Calu3 (cell line): ENCODE measurements at regions of chr20 and their contacts with region 1.

Region 1: DNA sequence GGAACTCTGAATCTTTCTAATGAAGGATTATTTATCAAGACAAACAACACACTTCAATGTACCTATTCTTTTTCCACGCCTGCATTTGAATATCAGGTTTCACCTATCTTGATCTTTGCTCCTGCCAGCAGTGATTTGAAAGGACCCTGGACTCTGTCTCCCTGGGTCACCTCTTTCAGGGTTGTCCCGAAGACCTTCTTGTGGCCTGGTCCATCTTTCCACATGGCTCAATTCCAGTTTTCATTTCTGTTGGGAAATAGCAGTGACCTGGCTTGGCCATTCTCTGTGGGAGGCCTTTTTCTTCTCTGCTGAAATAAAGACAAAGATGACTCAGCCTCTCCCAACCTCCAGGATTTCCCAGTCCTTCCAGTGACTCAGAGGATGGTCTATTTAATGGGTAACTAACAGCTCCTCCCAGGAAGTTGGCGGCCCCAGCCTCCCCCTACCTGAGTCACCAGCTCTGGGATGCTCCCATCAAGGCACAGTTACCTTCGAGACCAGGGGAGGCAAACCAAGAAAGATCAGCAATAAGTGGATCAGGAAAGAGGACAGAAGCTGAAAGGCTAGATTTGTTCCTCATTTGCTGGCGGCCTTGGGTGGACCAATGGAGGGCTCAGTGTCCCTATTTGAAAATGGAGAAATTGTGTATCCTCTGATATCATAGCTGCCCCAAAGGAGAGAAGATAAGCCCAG is 120.2 kb upstream of the RNF24 start:
- DNase-seq: peak; percentile 83
- H3K4me3 Mint-ChIP-seq: peak overlapping the region; percentile 47
- H3K27ac Mint-ChIP-seq: peak overlapping the region; percentile 40
- H3K4me1 Mint-ChIP-seq: peaks cover 45% of the 10 kb centered on the region
- H3K27me3 Mint-ChIP-seq: no peaks in the 10 kb centered on the region
- CTCF ChIP-seq: no peak

Region 2: GRCh38 chr20:4154958-4155411 is 19.5 kb after region 1 on chr20:
- CTCF ChIA-PET with region 1: interaction called, 5 read pairs
- intact Hi-C with region 1: loop called (anchors 2 kb)
- DNase-seq: no peak
- H3K4me3 Mint-ChIP-seq: no peak overlapping the region
- H3K27ac Mint-ChIP-seq: no peak overlapping the region
- H3K4me1 Mint-ChIP-seq: peaks cover 48% of the 10 kb centered on the region
- H3K27me3 Mint-ChIP-seq: no peaks in the 10 kb centered on the region
- CTCF ChIP-seq: no peak

Region 3: GRCh38 chr20:4534315-4534714 is 398.8 kb after region 1 on chr20:
- CTCF ChIA-PET with region 1: no interaction called
- intact Hi-C with region 1: no loop called
- DNase-seq: no peak
- H3K4me3 Mint-ChIP-seq: no peak overlapping the region
- H3K27ac Mint-ChIP-seq: no peak overlapping the region
- H3K4me1 Mint-ChIP-seq: no peaks in the 10 kb centered on the region
- H3K27me3 Mint-ChIP-seq: peaks cover 56% of the 10 kb centered on the region
- CTCF ChIP-seq: no peak